ENCODE measurements at regions of chr1 and their contacts with region 1.

Region 1: DNA sequence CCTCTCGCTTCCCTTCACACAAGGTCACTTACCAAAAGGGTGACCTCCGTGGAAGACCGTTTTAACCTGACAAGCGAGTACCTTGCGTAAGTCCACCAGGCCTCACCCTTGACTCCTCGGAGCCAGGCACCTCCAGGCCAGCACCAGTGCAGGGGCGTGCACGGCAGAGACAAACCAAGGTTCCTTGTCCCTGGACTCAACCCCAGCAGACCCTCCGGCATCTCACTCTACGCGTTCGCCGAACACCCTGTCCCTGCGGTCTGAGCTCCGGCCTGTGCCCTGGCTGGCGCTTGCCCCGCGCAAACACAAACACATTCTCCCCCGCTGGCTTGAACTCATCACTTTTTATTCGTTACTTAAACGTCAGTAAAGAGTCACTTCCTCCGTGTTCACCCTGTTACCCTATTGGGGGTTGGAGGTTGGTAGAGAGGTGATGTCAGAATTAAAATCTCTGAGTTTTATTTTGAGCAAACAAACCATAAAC is 4.5 kb downstream of the TBX15 start:
- DNase-seq: no peak
- ATAC-seq: no peak

Region 2: DNA sequence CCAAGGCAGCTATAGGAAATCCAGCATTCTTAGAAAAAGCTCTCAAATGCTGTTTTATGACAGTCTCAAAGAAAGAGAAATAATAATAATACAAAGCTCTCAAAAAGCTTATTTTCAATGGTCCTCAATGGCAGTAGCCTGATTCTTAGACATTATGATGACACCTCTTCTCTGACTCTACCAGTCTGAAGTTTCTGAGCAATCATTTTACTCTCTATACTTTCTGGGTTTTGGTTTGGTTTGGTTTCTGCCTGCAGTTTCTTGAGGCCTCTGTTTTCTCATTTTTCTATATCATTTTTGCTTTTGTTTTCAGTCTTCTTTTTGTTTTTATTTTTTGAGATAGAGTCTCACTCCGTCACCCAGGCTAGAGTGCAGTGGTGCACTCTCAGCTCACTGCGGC is 54.8 kb after region 1 on chr1:
- intact Hi-C with region 1: loop called (anchors 2 kb)
- DNase-seq: no peak
- ATAC-seq: no peak

Region 3: GRCh38 chr1:119115311-119115710 is 131.7 kb after region 1 on chr1:
- intact Hi-C with region 1: no loop called
- DNase-seq: no peak
- ATAC-seq: no peak